ENCODE measurements at regions of chr4 and their contacts with region 1.

Region 1: DNA sequence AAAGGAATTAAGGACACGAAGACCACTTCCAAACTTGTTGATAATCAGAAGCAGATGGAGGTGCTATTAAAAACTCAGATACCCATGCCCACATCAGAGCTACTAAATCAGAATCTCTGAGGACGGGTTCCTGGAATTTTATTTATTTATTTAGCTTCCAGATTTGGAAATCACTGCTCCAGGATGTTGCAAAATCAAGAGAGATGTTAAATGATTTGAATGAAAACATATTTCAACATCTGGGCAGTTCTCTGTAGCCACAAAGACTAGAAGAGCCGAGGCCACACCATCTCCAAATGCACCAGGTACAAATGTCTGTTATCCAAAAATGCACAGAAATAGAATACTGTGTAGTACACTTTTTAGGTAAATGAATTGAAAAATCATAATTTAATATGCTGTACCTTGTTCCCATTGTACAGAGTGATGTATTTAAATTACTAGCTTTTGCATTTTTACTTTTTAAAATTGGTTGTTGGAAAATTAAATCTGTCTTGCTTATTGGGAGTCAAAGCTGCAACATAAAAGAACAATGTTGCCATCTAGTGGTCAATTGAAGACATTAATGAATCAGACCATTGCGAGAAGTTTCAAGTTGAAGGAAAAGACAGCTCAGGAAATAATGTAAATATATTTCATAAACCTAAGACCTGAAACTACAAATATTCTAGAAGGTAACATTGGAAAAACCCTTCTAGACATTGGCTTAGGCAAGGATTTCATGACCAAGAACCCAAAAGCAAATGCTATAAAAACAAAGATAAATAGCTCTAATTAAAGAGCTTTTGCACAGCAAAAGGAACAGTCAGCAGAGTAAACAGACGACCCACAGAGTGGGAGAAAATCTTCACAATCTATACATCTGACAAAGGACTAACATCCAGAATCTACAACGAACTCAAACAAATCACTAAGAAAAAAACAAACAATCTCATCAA is 151.3 kb upstream of the TTC29 start:
- DNase-seq: peak in 1 of 35 experiments; percentile 65
- ATAC-seq: no peak
- H3K4me3 ChIP-seq: no peak overlapping the region
- H3K4me3 Mint-ChIP-seq: no peak overlapping the region
- H3K27ac ChIP-seq: no peak overlapping the region
- H3K27ac Mint-ChIP-seq: no peak overlapping the region
- H3K4me1 ChIP-seq: no peaks in the 10 kb centered on the region
- H3K4me1 Mint-ChIP-seq: no peaks in the 10 kb centered on the region
- H3K27me3 ChIP-seq: peaks cover 0 to 5% of the 10 kb centered on the region in 2 experiments
- H3K27me3 Mint-ChIP-seq: peaks cover 10 to 24% of the 10 kb centered on the region in 2 donors

Region 2: GRCh38 chr4:146342600-146343192 is 754.2 kb before region 1 on chr4:
- CTCF ChIA-PET with region 1: interaction called, 16 to 53 read pairs
- POLR2A ChIA-PET with region 1: no interaction called
- DNase-seq: peak in 18 of 35 experiments; percentile 1 to 59 (median 8)
- ATAC-seq: no peak
- H3K4me3 ChIP-seq: no peak overlapping the region
- H3K4me3 Mint-ChIP-seq: no peak overlapping the region
- H3K27ac ChIP-seq: no peak overlapping the region
- H3K27ac Mint-ChIP-seq: no peak overlapping the region
- H3K4me1 ChIP-seq: no peaks in the 10 kb centered on the region
- H3K4me1 Mint-ChIP-seq: peaks cover 0 to 6% (median 0%) of the 10 kb centered on the region in 3 donors
- H3K27me3 ChIP-seq: no peaks in the 10 kb centered on the region
- H3K27me3 Mint-ChIP-seq: no peaks in the 10 kb centered on the region

Region 3: GRCh38 chr4:147019061-147019460 is 77.9 kb before region 1 on chr4:
- CTCF ChIA-PET with region 1: interaction called, 34 to 56 read pairs
- POLR2A ChIA-PET with region 1: no interaction called
- DNase-seq: peak in 29 of 35 experiments; percentile 6 to 64 (median 28)
- ATAC-seq: no peak
- H3K4me3 ChIP-seq: no peak overlapping the region
- H3K4me3 Mint-ChIP-seq: no peak overlapping the region
- H3K27ac ChIP-seq: no peak overlapping the region
- H3K27ac Mint-ChIP-seq: no peak overlapping the region
- H3K4me1 ChIP-seq: no peaks in the 10 kb centered on the region
- H3K4me1 Mint-ChIP-seq: no peaks in the 10 kb centered on the region
- H3K27me3 ChIP-seq: no peaks in the 10 kb centered on the region
- H3K27me3 Mint-ChIP-seq: peaks cover 7 to 8% of the 10 kb centered on the region in 2 donors

Region 4: GRCh38 chr4:147078875-147079658 is 17.9 kb before region 1 on chr4:
- CTCF ChIA-PET with region 1: interaction called in 1 of 2 experiments, 10 read pairs
- POLR2A ChIA-PET with region 1: no interaction called
- DNase-seq: no peak
- ATAC-seq: no peak
- H3K4me3 ChIP-seq: no peak overlapping the region
- H3K4me3 Mint-ChIP-seq: no peak overlapping the region
- H3K27ac ChIP-seq: no peak overlapping the region
- H3K27ac Mint-ChIP-seq: no peak overlapping the region
- H3K4me1 ChIP-seq: no peaks in the 10 kb centered on the region
- H3K4me1 Mint-ChIP-seq: no peaks in the 10 kb centered on the region
- H3K27me3 ChIP-seq: peaks cover 0 to 4% of the 10 kb centered on the region in 2 experiments
- H3K27me3 Mint-ChIP-seq: peaks cover 11 to 25% of the 10 kb centered on the region in 2 donors

Region 5: DNA sequence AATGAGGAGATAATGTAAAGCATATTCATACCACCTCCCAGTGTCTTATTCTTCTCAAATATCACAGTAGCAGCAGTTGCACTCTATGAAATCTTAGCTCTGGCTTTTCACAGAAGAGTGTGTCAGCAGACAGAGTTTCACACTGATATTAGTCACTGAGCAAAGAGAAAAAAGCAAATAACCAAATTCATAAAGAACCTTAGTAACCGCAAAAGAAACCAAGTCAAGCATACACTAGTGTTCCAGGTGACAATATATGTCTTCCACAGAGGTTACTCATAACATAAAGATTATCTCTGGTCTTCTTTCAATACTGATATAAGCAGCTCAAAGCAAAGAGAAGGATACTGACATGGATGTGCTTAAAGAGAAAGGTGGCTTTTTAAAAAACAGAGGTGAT is 202.3 kb after region 1 on chr4:
- CTCF ChIA-PET with region 1: no interaction called
- POLR2A ChIA-PET with region 1: no interaction called
- DNase-seq: no peak
- ATAC-seq: no peak
- H3K4me3 ChIP-seq: no peak overlapping the region
- H3K4me3 Mint-ChIP-seq: no peak overlapping the region
- H3K27ac ChIP-seq: no peak overlapping the region
- H3K27ac Mint-ChIP-seq: no peak overlapping the region
- H3K4me1 ChIP-seq: no peaks in the 10 kb centered on the region
- H3K4me1 Mint-ChIP-seq: no peaks in the 10 kb centered on the region
- H3K27me3 ChIP-seq: no peaks in the 10 kb centered on the region
- H3K27me3 Mint-ChIP-seq: no peaks in the 10 kb centered on the region

Measured in T-cell (primary cell).